IMR-90 (cell line): ENCODE measurements at regions of chr6 and their contacts with region 1.

Region 1: GRCh38 chr6:87701676-87702588 is at the start of gene AKIRIN2:
- DNase-seq: peak; percentile 99
- ATAC-seq: peak; percentile 74
- H3K4me3 ChIP-seq: peak within 1 kb of the TSS; percentile 59
- H3K27ac ChIP-seq: peak within 1 kb of the TSS; percentile 87
- H3K4me1 ChIP-seq: peaks cover 10% of the 10 kb centered on the region
- H3K27me3 ChIP-seq: no peaks in the 10 kb centered on the region
- CTCF ChIP-seq: no peak
- POLR2A ChIP-seq: peak; percentile 97
- RAD21 ChIP-seq: no peak
- total RNA-seq, gene AKIRIN2: 7.9 and 10.8 TPM in 2 replicates

Region 2: DNA sequence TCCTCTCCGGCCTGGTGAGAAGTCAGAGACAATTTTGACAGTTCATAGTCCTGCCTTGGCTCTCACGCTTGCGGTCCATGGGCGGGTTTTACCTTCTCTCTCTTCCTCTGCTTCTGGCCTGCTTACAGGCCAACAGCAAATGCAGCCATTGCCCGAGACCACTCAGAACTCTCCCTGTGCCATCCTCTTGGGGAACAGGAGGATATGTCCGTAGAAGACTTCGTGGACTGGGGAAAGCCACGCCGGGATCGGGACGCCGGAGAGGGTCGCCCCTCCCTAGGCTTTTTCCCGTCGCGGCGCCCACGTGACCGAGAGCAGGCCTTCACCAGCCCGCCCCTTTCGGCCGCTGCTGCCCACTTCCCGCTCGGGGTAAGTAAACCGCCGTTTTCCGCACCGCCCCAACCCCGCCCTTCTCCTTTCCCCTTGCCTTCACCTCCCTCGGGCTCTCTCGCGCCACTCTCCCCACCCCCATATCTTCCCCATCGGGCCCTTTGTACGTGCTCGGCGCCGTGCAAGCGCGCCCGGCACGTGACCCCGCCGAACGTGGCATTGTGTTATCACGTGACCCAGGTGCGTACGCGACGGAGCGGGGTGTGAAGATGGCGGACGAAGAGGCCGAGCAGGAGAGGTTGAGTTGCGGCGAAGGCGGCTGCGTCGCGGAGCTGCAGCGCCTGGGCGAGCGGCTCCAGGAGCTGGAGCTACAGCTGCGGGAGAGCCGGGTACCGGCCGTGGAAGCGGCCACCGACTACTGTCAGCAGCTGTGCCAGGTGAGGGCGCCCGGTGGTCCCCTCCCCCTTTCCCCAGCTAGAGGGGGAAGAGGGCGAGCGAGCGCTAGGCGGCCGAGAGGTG is 546.7 kb before region 1 on chr6 and contains the start of gene ZNF292:
- CTCF ChIA-PET with region 1: no interaction called
- POLR2A ChIA-PET with region 1: no interaction called
- dilution Hi-C with region 1: no loop called
- in situ Hi-C with region 1: no loop called
- intact Hi-C with region 1: loop called (anchors 5 kb)
- DNase-seq: peak; percentile 97
- ATAC-seq: peak; percentile 84
- H3K4me3 ChIP-seq: peak within 1 kb of the TSS; percentile 68
- H3K27ac ChIP-seq: peak within 1 kb of the TSS; percentile 94
- H3K4me1 ChIP-seq: peaks cover 13% of the 10 kb centered on the region
- H3K27me3 ChIP-seq: no peaks in the 10 kb centered on the region
- CTCF ChIP-seq: no peak
- POLR2A ChIP-seq: peak; percentile 59
- RAD21 ChIP-seq: no peak; the same call in 1 of the 2 replicates
- total RNA-seq, gene ZNF292: 28.3 and 36.9 TPM in 2 replicates

Region 3: DNA sequence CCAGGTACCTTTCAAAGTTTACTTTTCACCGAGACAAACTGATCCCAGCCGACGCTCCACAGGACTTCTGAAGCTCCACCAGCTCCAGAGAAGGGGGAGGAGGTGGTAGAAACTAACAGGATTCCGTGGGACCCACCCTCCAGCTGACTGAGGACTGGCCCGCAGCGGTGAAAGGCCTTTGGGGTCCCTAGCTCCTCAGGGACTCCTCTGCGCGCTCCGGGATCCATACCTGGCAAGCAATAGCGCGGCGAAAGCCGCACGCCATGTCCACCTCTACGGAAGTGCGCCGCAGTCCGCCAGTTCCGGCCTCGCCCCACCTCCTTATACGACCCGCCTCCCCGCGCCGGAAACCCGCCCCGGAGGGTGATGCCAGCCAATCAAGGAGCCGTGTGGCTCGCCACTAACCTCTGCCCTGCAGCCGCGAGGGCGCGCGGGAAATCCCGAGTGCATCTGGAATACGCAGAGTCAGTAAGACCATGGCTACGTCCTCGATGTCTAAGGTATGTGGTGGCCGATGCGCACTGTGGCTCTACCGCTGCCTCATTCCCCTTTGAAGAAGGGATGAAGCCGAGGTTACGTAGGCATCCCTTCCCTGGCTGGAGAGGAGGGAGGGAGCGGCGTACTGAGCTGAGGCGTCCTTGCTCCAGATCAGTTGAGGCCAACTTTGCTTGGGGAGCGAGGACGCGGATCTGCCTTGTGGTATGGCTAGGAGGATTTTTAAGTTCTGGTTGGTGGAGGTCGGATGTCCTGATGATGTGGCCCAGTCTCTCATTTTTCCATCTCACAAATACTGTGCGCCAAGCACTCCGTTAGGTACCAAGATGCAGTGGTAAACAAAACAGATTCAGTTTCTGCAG is 112.0 kb before region 1 on chr6 and contains the starts of genes ORC3 and RARS2:
- CTCF ChIA-PET with region 1: no interaction called
- POLR2A ChIA-PET with region 1: interaction called, 3 read pairs
- dilution Hi-C with region 1: no loop called
- in situ Hi-C with region 1: no loop called
- intact Hi-C with region 1: loop called (anchors 1 kb)
- DNase-seq: peak; percentile 92
- ATAC-seq: peak; percentile 99
- H3K4me3 ChIP-seq: peak within 1 kb of the TSS; percentile 77
- H3K27ac ChIP-seq: peak within 1 kb of the TSS; percentile 90
- H3K4me1 ChIP-seq: peaks cover 2% of the 10 kb centered on the region
- H3K27me3 ChIP-seq: no peaks in the 10 kb centered on the region
- CTCF ChIP-seq: peak; percentile 3; the same call in 1 of the 2 replicates
- POLR2A ChIP-seq: peak; percentile 94
- RAD21 ChIP-seq: no peak
- total RNA-seq, gene ORC3: 30.6 and 33.1 TPM in 2 replicates
- total RNA-seq, gene RARS2: 33.0 and 56.9 TPM in 2 replicates

Region 4: GRCh38 chr6:87756858-87757257 is 54.9 kb after region 1 on chr6:
- CTCF ChIA-PET with region 1: no interaction called
- POLR2A ChIA-PET with region 1: no interaction called
- dilution Hi-C with region 1: no loop called
- in situ Hi-C with region 1: no loop called
- intact Hi-C with region 1: loop called (anchors 5 kb)
- DNase-seq: peak; percentile 83
- ATAC-seq: peak; percentile 73
- H3K4me3 ChIP-seq: no peak overlapping the region
- H3K27ac ChIP-seq: peak overlapping the region; percentile 45; the same call in 1 of the 2 replicates
- H3K4me1 ChIP-seq: peaks cover 5% of the 10 kb centered on the region; the same call in 1 of the 2 replicates
- H3K27me3 ChIP-seq: no peaks in the 10 kb centered on the region
- CTCF ChIP-seq: no peak
- POLR2A ChIP-seq: no peak
- RAD21 ChIP-seq: no peak

Region 5: DNA sequence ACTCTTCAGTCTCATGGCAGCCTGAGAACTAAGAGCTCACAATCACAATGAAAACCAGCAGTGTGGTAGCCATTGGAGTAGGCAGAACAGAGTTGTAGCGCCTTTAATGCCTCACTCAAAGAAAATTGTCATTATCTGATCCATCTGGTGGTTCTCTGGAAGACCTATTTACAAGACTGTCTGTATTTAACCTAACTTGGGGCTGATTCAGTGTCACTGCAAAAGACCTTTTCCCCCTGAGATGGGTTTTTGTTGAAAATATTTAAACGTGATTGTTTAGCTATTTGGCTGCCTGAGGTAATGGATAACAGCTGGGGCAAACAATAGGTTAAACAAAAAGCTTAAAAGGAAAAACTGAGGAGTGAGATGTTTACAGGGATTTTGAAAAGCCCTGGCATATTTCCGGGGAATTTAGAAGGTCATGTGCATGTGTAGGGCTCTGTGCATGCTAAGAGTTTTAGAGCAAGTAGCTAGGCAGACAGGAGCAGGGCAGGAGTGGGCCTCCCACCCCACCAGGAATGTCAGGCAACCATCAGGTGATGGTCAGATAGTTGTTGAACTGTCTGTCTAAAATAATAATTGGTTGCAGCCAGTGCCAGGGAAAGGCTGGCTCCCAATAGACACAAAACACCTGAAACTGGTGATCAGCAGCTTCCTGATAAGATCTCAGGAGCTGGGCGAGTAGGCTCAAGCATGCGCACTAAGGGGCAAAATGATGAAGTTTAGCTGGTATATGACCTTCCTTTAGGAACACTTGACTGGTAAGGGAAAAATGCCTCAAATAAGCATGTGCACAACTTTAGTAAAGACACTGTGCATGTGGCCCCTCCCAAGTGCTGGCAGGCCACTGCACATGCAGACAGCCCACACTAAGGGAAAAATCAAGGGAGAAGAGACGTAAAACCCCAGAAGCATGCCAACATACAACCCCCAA is 70.9 kb after region 1 on chr6:
- CTCF ChIA-PET with region 1: no interaction called
- POLR2A ChIA-PET with region 1: no interaction called
- dilution Hi-C with region 1: no loop called
- in situ Hi-C with region 1: no loop called
- intact Hi-C with region 1: no loop called
- DNase-seq: peak; percentile 59
- ATAC-seq: peak; percentile 86
- H3K4me3 ChIP-seq: no peak overlapping the region
- H3K27ac ChIP-seq: peak overlapping the region; percentile 40; the same call in 1 of the 2 replicates
- H3K4me1 ChIP-seq: peaks cover 14% of the 10 kb centered on the region
- H3K27me3 ChIP-seq: no peaks in the 10 kb centered on the region
- CTCF ChIP-seq: no peak
- POLR2A ChIP-seq: no peak
- RAD21 ChIP-seq: no peak

Region 6: GRCh38 chr6:87799651-87800050 is 97.7 kb after region 1 on chr6:
- CTCF ChIA-PET with region 1: no interaction called
- POLR2A ChIA-PET with region 1: no interaction called
- dilution Hi-C with region 1: no loop called
- in situ Hi-C with region 1: no loop called
- intact Hi-C with region 1: loop called (anchors 2 kb)
- DNase-seq: no peak
- ATAC-seq: no peak
- H3K4me3 ChIP-seq: no peak overlapping the region
- H3K27ac ChIP-seq: no peak overlapping the region
- H3K4me1 ChIP-seq: no peaks in the 10 kb centered on the region
- H3K27me3 ChIP-seq: peaks cover 2% of the 10 kb centered on the region; the same call in 1 of the 2 replicates
- CTCF ChIP-seq: no peak
- POLR2A ChIP-seq: no peak
- RAD21 ChIP-seq: no peak

Region 7: GRCh38 chr6:87929843-87930288 is 227.9 kb after region 1 on chr6:
- CTCF ChIA-PET with region 1: no interaction called
- POLR2A ChIA-PET with region 1: no interaction called
- dilution Hi-C with region 1: no loop called
- in situ Hi-C with region 1: no loop called
- intact Hi-C with region 1: loop called (anchors 10 kb)
- DNase-seq: peak; percentile 79
- ATAC-seq: peak; percentile 99
- H3K4me3 ChIP-seq: no peak overlapping the region
- H3K27ac ChIP-seq: no peak overlapping the region
- H3K4me1 ChIP-seq: no peaks in the 10 kb centered on the region
- H3K27me3 ChIP-seq: peaks cover 10% of the 10 kb centered on the region
- CTCF ChIP-seq: peak; percentile 79
- POLR2A ChIP-seq: no peak
- RAD21 ChIP-seq: peak; percentile 78

Region 8: DNA sequence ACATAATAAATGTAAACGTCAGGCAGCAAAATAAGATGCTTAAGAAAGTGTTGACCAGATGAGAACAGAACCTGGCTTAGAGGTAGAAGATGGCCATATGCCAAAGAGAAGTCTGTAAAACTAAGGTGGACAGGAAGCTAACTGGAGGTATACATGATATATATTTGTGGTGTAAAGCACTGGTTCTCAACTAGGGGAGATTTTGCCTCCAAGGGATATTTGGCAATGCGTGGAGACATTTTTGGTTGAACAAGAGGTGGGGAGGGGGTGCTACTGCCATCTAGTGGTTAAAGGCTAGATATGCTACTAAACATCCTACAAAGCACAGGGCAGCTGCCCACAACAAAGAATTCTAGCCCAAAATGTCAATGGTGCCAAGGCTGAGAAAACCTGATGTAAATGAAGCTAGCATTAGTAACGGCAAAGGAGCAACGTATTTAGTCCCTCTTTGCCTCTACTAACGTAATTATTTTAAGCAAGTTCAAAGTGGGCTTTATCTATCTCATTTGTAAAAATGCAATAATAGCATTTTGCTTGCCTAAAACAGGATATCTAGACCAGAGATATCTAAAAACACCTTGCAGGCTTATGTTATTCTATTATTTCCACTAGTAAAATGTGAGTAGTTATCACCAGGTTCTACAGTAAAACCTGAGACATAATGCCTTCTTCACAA is 1078.9 kb after region 1 on chr6:
- CTCF ChIA-PET with region 1: no interaction called
- POLR2A ChIA-PET with region 1: no interaction called
- dilution Hi-C with region 1: no loop called
- in situ Hi-C with region 1: no loop called
- intact Hi-C with region 1: loop called (anchors 5 kb)
- DNase-seq: peak; percentile 70
- ATAC-seq: peak; percentile 84
- H3K4me3 ChIP-seq: no peak overlapping the region
- H3K27ac ChIP-seq: no peak overlapping the region
- H3K4me1 ChIP-seq: no peaks in the 10 kb centered on the region; the same call in 1 of the 2 replicates
- H3K27me3 ChIP-seq: no peaks in the 10 kb centered on the region
- CTCF ChIP-seq: peak; percentile 82
- POLR2A ChIP-seq: no peak
- RAD21 ChIP-seq: peak; percentile 84